Mammary epithelial cell (primary cell): ENCODE measurements at regions of chr16 and their contacts with region 1.

Region 1: GRCh38 chr16:1705688-1706385 is at the start of gene MAPK8IP3:
- DNase-seq: peak; percentile 90
- H3K4me3 ChIP-seq: peak within 1 kb of the TSS; percentile 57 to 100 (median 87)
- H3K27ac ChIP-seq: peak within 1 kb of the TSS; percentile 86
- H3K4me1 ChIP-seq: peaks cover 24% of the 10 kb centered on the region
- H3K27me3 ChIP-seq: no peaks in the 10 kb centered on the region
- CTCF ChIP-seq: peak; percentile 70 to 79
- total RNA-seq, gene MAPK8IP3: 45.2 to 51.2 TPM

Region 2: DNA sequence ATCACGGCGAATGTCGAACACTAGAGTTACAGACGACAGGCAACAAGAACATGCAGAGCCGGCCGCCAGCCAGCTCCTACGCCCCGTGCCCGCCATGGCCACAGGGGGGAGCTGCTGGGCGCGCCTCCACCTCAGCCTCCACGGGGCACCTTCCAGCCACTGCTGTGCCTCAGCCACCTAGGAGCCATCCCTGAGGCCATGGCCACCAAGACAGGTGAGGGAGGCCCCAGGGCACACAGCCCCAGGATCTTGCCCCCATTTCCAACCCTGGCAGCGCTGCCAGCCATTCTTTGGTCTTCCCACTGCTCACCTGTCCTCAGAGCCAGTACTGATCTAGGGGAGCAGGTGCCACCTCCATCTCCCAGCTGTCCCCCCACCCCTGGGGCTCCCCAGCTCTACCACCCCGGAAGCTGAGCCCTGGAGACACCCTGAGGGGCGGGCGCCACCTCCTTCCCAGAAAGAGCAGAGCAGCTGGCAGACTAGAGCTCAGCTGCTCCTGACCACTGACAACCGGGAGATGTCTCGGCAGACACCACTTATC is 342.3 kb before region 1 on chr16:
- CTCF ChIA-PET with region 1: no interaction called
- dilution Hi-C with region 1: no loop called
- in situ Hi-C with region 1: no loop called
- intact Hi-C with region 1: loop called (anchors 5 kb)
- DNase-seq: peak; percentile 44
- H3K4me3 ChIP-seq: no peak overlapping the region
- H3K27ac ChIP-seq: no peak overlapping the region
- H3K4me1 ChIP-seq: no peaks in the 10 kb centered on the region
- H3K27me3 ChIP-seq: no peaks in the 10 kb centered on the region
- CTCF ChIP-seq: peak; percentile 77 to 85

Region 3: GRCh38 chr16:1420111-1420540 is 285.7 kb before region 1 on chr16:
- CTCF ChIA-PET with region 1: no interaction called
- dilution Hi-C with region 1: no loop called
- in situ Hi-C with region 1: no loop called
- intact Hi-C with region 1: loop called (anchors 2 kb)
- DNase-seq: no peak
- H3K4me3 ChIP-seq: peak overlapping the region; percentile 69 to 95 (median 91)
- H3K27ac ChIP-seq: peak overlapping the region; percentile 66
- H3K4me1 ChIP-seq: peaks cover 6% of the 10 kb centered on the region
- H3K27me3 ChIP-seq: no peaks in the 10 kb centered on the region
- CTCF ChIP-seq: no peak

Region 4: DNA sequence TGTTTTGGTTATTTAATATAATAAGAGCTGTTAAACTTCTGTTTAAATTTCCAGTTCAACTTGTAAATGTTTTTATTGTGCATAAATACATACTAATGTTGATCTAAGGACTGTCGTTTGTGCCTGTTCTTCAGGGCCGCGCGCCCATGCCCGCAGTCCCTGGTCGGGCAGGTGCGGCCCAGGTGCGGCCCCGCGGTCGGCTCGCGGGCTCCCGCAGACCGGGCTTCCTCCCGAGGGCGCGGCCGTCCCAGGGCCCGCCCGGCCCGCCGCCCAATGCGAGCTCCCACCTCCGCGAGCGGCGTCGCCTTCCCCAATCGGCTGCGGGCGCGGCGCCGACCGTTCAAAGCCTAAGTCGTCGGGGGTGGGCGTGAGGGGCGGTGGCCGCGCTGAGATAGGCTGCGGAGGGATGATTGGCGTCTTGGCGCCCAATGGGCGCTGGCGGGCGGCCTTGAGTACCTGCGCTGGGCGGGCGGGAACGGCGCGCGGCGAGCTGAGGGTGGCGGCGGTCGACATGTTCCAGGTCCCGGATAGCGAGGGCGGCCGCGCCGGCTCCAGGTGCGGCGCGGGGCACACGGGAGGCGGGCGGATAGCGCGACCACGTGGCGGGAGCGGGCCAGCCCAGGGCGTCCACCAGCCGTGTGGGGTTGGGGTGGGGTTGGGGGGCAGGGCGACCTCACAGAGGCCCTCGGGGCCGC is 27.9 kb before region 1 on chr16 and contains the start of gene JPT2:
- CTCF ChIA-PET with region 1: interaction called, 8 read pairs
- dilution Hi-C with region 1: no loop called
- in situ Hi-C with region 1: no loop called
- intact Hi-C with region 1: loop called (anchors 1 kb)
- DNase-seq: peak; percentile 98
- H3K4me3 ChIP-seq: peak within 1 kb of the TSS; percentile 79 to 97 (median 97)
- H3K27ac ChIP-seq: peak within 1 kb of the TSS; percentile 88
- H3K4me1 ChIP-seq: peaks cover 33% of the 10 kb centered on the region
- H3K27me3 ChIP-seq: no peaks in the 10 kb centered on the region
- CTCF ChIP-seq: no peak
- total RNA-seq, gene JPT2: 53.0 to 117 TPM

Region 5: GRCh38 chr16:1691276-1691675 is 14.6 kb before region 1 on chr16:
- CTCF ChIA-PET with region 1: interaction called, 11 read pairs
- dilution Hi-C with region 1: no loop called
- in situ Hi-C with region 1: no loop called
- intact Hi-C with region 1: loop called (anchors 1 kb)
- DNase-seq: peak; percentile 75
- H3K4me3 ChIP-seq: no peak overlapping the region
- H3K27ac ChIP-seq: peak overlapping the region; percentile 97
- H3K4me1 ChIP-seq: peaks cover 56% of the 10 kb centered on the region
- H3K27me3 ChIP-seq: no peaks in the 10 kb centered on the region
- CTCF ChIP-seq: peak; percentile 19 to 48

Region 6: GRCh38 chr16:1723450-1724147 is 17.8 kb after region 1 on chr16:
- CTCF ChIA-PET with region 1: interaction called, 4 read pairs
- dilution Hi-C with region 1: no loop called
- in situ Hi-C with region 1: no loop called
- intact Hi-C with region 1: loop called (anchors 1 kb)
- DNase-seq: peak; percentile 51
- H3K4me3 ChIP-seq: no peak overlapping the region
- H3K27ac ChIP-seq: no peak overlapping the region
- H3K4me1 ChIP-seq: peaks cover 5% of the 10 kb centered on the region
- H3K27me3 ChIP-seq: no peaks in the 10 kb centered on the region
- CTCF ChIP-seq: peak; percentile 79 to 80

Region 7: GRCh38 chr16:1782352-1783091 is 76.7 kb after region 1 on chr16 and contains the starts of genes NUBP2 and SPSB3:
- CTCF ChIA-PET with region 1: interaction called, 3 read pairs
- dilution Hi-C with region 1: loop called (anchors 5 kb)
- in situ Hi-C with region 1: no loop called
- intact Hi-C with region 1: no loop called
- DNase-seq: peak; percentile 100
- H3K4me3 ChIP-seq: peak within 1 kb of the TSS; percentile 82 to 90 (median 83)
- H3K27ac ChIP-seq: peak within 1 kb of the TSS; percentile 47
- H3K4me1 ChIP-seq: peaks cover 30% of the 10 kb centered on the region
- H3K27me3 ChIP-seq: no peaks in the 10 kb centered on the region
- CTCF ChIP-seq: no peak
- total RNA-seq, gene NUBP2: 64.3 to 67.0 TPM
- total RNA-seq, gene SPSB3: 20.9 to 43.0 TPM